ENCODE measurements at regions of chr12 and their contacts with region 1.

Region 1: GRCh38 chr12:85448548-85449139 is 168.6 kb downstream of the ALX1 start:
- DNase-seq: peak in 1 of 4 donors; percentile 20
- ATAC-seq: peak; percentile 52
- H3K4me3 ChIP-seq: no peak overlapping the region
- H3K27ac ChIP-seq: no peak overlapping the region
- H3K4me1 ChIP-seq: no peaks in the 10 kb centered on the region
- H3K27me3 ChIP-seq: no peaks in the 10 kb centered on the region
- CTCF ChIP-seq: peak in 1 of 2 donors; percentile 29

Region 2: GRCh38 chr12:85076688-85077430 is 371.8 kb before region 1 on chr12:
- intact Hi-C with region 1: loop called in 1 of 2 experiments (anchors 10 kb)
- DNase-seq: peak in 2 of 4 donors; percentile 33 to 49
- ATAC-seq: peak; percentile 98
- H3K4me3 ChIP-seq: no peak overlapping the region
- H3K27ac ChIP-seq: no peak overlapping the region
- H3K4me1 ChIP-seq: no peaks in the 10 kb centered on the region
- H3K27me3 ChIP-seq: no peaks in the 10 kb centered on the region
- CTCF ChIP-seq: peak in 1 of 2 donors; percentile 15

Region 3: DNA sequence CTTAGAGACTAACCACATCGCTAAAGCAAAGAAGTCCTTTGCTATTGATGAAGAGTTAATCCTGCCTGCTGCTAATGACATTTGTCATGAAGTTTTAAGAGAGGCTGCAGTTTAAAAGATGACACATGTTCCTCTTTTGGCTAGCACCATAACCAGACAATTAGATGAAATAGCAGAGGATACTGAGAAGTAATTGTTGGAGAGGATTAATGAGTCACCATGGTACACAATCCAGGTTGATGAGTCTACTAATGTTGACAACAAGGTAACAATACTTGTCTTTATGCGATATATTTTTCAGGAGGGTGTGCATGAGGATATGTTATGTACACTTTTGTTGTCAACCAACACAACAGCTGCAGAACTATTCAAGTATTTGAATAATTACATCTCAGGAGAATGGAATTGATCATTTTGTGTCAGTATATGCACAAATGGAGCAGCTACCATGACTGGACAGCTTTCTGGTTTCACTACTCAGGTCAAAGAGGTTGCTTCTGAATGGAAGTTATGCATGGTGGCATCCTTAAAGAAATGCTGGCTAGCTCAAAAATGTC is 355.8 kb before region 1 on chr12:
- intact Hi-C with region 1: no loop called
- DNase-seq: no peak
- ATAC-seq: no peak
- H3K4me3 ChIP-seq: no peak overlapping the region
- H3K27ac ChIP-seq: no peak overlapping the region
- H3K4me1 ChIP-seq: no peaks in the 10 kb centered on the region
- H3K27me3 ChIP-seq: no peaks in the 10 kb centered on the region
- CTCF ChIP-seq: no peak